Spleen (tissue), 13 donors: ENCODE measurements at regions of chr20 and their contacts with region 1.

Region 1: DNA sequence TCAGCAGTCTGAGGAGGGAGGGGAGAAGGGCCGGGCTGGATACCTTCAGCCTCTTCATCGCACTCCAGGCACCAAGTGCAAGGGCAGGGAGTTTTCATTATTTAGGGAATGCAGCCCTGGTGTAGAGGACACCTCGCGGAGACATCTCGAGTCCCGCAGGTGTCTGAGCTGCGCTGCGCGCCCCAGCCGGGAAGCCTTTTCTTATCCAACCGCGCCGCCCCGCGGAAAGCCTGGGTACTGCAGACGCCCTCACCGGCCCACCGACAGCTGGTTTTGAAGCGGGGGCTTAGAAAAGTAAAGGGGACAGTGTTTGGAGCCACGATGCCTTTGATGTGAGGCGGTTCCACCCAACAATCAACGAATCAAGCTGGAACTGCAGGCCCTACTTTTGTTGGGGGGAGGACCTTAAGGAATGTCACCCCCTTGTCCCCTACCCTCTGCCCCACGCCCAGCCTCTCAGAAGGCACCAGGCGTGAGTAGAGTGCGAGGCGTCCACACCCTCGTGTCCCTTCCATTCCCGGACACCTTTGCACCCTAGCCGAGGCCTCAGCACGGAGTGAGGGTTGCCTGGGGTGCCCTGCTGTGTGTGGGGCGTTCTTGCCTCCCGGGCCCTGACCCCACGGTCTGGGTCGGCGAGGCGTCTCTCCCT is 8.6 kb downstream of the NKX2-2 start:
- DNase-seq: peak; percentile 91
- H3K4me3 ChIP-seq: peak overlapping the region in 6 of 8 donors; percentile 31 to 69 (median 43)
- H3K27ac ChIP-seq: no peak overlapping the region
- H3K4me1 ChIP-seq: peaks cover 19 to 53% (median 37%) of the 10 kb centered on the region in 6 donors
- H3K27me3 ChIP-seq: peaks cover 17 to 97% (median 58%) of the 10 kb centered on the region in 7 donors
- CTCF ChIP-seq: peak; percentile 87 to 97 (median 93)
- POLR2A ChIP-seq: no peak

Region 2: DNA sequence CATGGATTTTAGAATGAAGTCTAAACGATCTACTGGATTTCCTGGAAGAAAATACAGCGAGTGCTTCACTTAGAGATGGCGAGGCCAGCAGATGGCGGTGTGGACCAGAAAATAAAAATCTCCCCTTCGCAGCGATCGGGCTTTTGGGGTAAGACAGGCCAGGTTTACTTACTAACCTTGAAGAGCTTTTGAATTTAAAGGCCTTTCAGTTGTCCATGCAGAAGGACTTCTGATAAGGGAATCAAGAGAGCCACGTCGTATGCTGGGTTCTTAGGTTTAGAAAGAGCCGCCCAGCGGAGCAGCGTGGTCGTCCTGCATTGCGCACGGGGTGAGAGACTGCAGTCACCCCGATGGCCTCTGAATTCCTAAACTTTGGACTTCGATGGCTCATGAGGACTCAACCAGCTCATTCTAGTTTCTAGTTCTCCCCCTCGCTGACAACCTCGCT is 667.7 kb before region 1 on chr20:
- intact Hi-C with region 1: loop called (anchors 10 kb)
- DNase-seq: no peak
- H3K4me3 ChIP-seq: peak overlapping the region in 1 of 8 donors; percentile 11
- H3K27ac ChIP-seq: no peak overlapping the region
- H3K4me1 ChIP-seq: peaks cover 0 to 10% (median 5%) of the 10 kb centered on the region in 6 donors
- H3K27me3 ChIP-seq: peaks cover 0 to 52% (median 3%) of the 10 kb centered on the region in 7 donors
- CTCF ChIP-seq: peak; percentile 9 to 71 (median 43)
- POLR2A ChIP-seq: no peak

Region 3: DNA sequence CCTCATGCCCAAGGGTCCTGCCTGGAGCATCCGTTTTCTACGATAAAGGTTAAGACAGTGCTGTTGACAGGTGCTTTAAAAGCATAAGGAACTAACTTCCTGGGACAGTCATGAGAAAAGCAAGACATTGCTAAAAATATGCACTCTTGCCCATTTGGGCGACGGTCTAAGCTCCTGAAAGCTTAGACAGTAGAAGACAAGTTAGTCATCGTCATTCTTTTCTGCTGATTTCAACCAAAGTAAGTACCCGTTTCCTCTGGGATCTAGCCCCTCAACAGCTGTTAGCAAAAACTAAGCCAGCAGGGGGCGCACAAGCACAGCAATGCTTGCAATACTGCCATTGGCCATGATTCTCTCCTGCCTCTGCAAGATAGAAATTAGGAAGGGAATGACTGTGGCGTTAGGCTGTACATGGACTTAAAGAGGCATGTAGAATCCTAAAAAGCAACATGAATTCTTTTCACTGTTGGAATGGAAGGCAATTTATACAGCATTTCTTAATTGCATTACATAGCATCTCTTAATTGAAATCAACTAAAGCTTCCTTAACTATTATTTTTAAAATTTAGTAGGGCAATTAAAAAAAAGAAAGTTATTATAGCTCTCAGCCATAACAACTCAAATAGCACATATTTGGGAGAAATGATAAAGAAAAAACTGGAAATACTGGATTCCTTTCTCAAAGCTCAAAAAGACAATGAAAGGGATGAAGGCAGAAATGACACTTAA is 645.0 kb before region 1 on chr20:
- intact Hi-C with region 1: loop called (anchors 10 kb)
- DNase-seq: peak; percentile 95
- H3K4me3 ChIP-seq: no peak overlapping the region
- H3K27ac ChIP-seq: no peak overlapping the region
- H3K4me1 ChIP-seq: peaks cover 0 to 11% (median 3%) of the 10 kb centered on the region in 6 donors
- H3K27me3 ChIP-seq: peaks cover 0 to 31% (median 3%) of the 10 kb centered on the region in 7 donors
- CTCF ChIP-seq: peak; percentile 62 to 94 (median 88)
- POLR2A ChIP-seq: no peak

Region 4: GRCh38 chr20:21235484-21236445 is 269.5 kb before region 1 on chr20:
- intact Hi-C with region 1: loop called (anchors 5 kb)
- DNase-seq: peak; percentile 87
- H3K4me3 ChIP-seq: no peak overlapping the region
- H3K27ac ChIP-seq: no peak overlapping the region
- H3K4me1 ChIP-seq: peaks cover 0 to 10% (median 6%) of the 10 kb centered on the region in 6 donors
- H3K27me3 ChIP-seq: no peaks in the 10 kb centered on the region
- CTCF ChIP-seq: peak; percentile 57 to 91 (median 77)
- POLR2A ChIP-seq: no peak